ENCODE measurements at regions of chrX and their contacts with region 1.

Region 1: GRCh38 chrX:71103110-71103983 is 3.2 kb downstream of the CXorf65 start:
- DNase-seq: peak; percentile 28 to 78 (median 50)
- ATAC-seq: peak; percentile 41 to 58
- H3K4me3 Mint-ChIP-seq: peak overlapping the region; percentile 73 to 88 (median 80)
- H3K27ac Mint-ChIP-seq: peak overlapping the region; percentile 90 to 97 (median 94)
- H3K4me1 Mint-ChIP-seq: peaks cover 39 to 90% (median 89%) of the 10 kb centered on the region in 4 donors
- H3K27me3 Mint-ChIP-seq: no peaks in the 10 kb centered on the region

Region 2: DNA sequence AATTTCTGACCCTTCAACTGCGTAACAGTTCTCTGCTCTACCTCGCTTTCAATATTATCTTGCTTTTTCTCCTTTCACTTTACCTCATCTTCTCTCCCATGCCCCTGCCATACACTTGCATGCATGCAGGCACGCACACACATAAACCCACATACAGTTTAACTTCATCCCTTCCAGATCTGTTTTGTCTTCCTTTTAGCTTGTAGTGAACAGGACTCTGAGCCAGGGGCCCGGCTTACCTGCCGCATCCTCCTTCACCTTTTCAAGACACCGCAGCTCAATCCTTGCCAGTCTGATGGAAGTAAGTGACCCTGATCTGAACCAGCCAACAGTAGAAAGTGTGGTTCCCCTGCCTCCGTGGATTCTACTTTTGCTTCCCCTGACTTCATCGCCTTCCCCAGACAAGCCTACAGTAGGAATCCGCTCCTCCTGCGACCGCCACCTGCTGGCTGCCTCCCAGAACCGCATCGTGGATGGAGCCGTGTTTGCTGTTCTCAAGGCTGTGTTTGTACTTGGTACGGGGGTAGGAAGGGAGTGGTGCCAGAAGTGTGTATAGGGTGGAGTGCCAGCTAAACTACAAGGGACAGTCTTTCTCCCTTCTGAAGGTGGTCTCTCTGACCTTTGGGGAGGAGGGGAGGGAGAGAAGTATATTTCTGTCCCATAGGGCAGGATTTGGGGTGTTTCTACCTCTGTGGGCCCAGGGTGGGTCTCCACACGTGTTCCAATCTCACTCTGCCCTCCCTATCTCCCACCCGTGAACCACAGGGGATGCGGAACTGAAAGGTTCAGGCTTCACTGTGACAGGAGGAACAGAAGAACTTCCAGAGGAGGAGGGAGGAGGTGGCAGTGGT is 25.8 kb after region 1 on chrX:
- POLR2A ChIA-PET with region 1: interaction called, 58 read pairs
- DNase-seq: peak; percentile 61 to 86 (median 74)
- ATAC-seq: peak; percentile 94 to 95
- H3K4me3 Mint-ChIP-seq: peak overlapping the region in 7 of 10 donors; percentile 3 to 60 (median 38)
- H3K27ac Mint-ChIP-seq: peak overlapping the region; percentile 70 to 93 (median 84)
- H3K4me1 Mint-ChIP-seq: peaks cover 16 to 26% (median 20%) of the 10 kb centered on the region in 4 donors
- H3K27me3 Mint-ChIP-seq: no peaks in the 10 kb centered on the region